ENCODE measurements at regions of chr5 and their contacts with region 1.

Region 1: DNA sequence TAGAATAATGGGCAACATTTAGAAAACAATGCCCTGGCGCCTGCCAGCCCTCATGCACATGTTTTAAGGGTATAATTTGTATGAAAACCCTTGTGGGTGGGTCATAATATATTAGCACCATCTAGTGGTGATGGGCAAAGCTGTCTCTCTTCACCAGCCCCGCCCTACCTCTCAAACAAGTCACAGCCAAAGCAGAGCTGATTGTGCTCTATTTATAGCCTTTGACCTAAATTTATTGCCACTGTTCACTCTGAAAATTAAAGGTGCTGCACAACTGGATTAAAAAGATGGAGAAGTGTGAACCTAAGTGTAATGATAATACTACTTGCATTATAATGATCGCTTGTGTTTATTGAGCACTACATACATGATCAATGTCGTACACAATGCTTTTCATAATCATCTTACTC is 131.9 kb upstream of the ANKH start:
- DNase-seq: peak; percentile 47 to 72 (median 67)
- ATAC-seq: peak; percentile 87 to 89
- H3K4me3 ChIP-seq: no peak overlapping the region
- H3K27ac ChIP-seq: no peak overlapping the region
- H3K4me1 ChIP-seq: no peaks in the 10 kb centered on the region
- H3K27me3 ChIP-seq: no peaks in the 10 kb centered on the region

Region 2: GRCh38 chr5:14700478-14701436 is 302.8 kb before region 1 on chr5:
- intact Hi-C with region 1: no loop called
- DNase-seq: peak in 1 of 3 donors; percentile 50
- ATAC-seq: peak; percentile 60 to 69
- H3K4me3 ChIP-seq: no peak overlapping the region
- H3K27ac ChIP-seq: peak overlapping the region; percentile 85
- H3K4me1 ChIP-seq: peaks cover 6% of the 10 kb centered on the region
- H3K27me3 ChIP-seq: no peaks in the 10 kb centered on the region

Region 3: DNA sequence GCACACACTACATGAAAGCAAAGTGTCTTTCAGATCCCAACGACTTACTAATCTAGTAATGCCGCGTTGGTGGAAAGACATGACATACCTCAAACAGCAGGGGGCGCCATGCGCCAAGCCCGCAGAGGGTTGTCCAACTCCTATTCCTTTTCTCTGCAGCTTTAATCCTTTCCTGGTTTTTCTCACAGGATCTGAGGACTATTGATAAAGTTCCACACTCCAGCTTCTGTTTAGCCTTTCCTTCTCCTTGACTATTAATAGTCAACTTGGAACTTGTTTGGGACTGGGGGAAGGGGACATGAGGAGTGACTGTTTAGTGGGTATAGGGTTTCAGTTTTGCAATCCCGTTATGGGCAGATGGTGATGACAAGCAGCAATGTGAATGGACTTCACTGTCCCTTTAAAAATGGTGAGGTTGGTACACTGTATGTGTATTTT is 276.1 kb before region 1 on chr5:
- intact Hi-C with region 1: loop called in 3 of 4 experiments (anchors 2 to 5 kb)
- DNase-seq: peak; percentile 76 to 89 (median 88)
- ATAC-seq: peak; percentile 74 to 80
- H3K4me3 ChIP-seq: no peak overlapping the region
- H3K27ac ChIP-seq: no peak overlapping the region
- H3K4me1 ChIP-seq: peaks cover 2% of the 10 kb centered on the region
- H3K27me3 ChIP-seq: no peaks in the 10 kb centered on the region

Region 4: DNA sequence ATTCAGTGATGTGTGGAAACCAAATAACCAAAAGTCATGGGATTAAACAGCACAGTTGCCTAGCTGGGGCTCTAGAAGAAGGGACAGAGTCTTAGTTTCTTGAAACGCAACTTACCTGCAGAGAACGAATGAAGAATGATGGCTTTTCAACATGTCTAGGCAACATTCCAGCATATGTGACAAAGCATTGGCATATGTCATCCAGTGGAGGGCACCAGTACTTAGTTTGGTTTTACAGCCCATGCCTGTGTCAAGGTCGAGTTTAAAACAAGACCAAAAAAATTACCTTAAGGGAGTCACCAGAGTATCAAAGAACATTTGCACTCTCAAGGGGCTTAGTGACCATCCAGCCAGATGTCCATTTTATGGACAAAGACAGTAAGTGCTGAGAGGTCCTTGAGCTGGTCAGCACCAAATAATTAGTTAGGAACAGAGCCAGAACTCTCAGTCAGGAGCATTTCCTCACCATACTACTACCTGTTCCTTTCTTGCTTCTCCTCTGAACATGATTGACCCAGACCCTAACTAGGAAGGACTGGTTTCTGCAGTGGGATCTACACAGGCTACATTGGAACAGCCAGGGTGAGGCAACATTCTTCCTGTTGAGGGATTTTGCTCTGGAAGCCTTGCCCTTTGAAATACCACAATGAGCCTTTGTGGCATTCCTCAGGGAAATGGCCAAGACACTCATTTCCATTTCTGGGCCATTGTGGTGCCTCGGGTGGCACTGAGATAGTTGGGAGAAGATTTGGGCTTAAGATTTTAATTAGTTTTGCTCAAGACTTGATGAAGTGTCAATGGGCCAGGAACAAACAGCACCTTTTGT is 56.5 kb before region 1 on chr5:
- intact Hi-C with region 1: loop called in 3 of 4 experiments (anchors 5 to 10 kb)
- DNase-seq: no peak
- ATAC-seq: peak; percentile 51
- H3K4me3 ChIP-seq: no peak overlapping the region
- H3K27ac ChIP-seq: no peak overlapping the region
- H3K4me1 ChIP-seq: peaks cover 3% of the 10 kb centered on the region
- H3K27me3 ChIP-seq: no peaks in the 10 kb centered on the region

Region 5: DNA sequence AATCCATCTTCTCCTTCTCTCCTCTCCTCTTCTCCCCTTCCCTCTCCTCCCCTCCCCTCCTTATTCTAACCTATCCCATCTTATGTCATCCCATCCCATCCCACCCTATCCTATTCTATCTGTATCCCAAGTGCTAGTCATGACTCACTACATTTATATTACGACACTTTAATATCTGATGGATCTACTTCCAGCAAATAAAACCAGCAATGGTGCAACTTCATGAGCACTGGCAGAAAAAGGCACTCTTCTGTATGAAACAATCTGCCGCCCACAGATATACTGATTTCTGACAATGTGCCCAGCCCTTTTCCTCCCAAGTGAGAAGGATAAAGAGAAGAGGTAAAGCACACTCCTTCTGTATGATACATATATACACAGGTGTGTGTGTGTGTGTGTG is 45.3 kb before region 1 on chr5:
- intact Hi-C with region 1: loop called in 1 of 4 experiments (anchors 10 kb)
- DNase-seq: no peak
- ATAC-seq: no peak
- H3K4me3 ChIP-seq: no peak overlapping the region
- H3K27ac ChIP-seq: no peak overlapping the region
- H3K4me1 ChIP-seq: peaks cover 3% of the 10 kb centered on the region
- H3K27me3 ChIP-seq: no peaks in the 10 kb centered on the region

Measured in right cardiac atrium (tissue), 5 donors.